Motor neuron (in vitro differentiated cells): ENCODE measurements at regions of chr19 and their contacts with region 1.

Region 1: DNA sequence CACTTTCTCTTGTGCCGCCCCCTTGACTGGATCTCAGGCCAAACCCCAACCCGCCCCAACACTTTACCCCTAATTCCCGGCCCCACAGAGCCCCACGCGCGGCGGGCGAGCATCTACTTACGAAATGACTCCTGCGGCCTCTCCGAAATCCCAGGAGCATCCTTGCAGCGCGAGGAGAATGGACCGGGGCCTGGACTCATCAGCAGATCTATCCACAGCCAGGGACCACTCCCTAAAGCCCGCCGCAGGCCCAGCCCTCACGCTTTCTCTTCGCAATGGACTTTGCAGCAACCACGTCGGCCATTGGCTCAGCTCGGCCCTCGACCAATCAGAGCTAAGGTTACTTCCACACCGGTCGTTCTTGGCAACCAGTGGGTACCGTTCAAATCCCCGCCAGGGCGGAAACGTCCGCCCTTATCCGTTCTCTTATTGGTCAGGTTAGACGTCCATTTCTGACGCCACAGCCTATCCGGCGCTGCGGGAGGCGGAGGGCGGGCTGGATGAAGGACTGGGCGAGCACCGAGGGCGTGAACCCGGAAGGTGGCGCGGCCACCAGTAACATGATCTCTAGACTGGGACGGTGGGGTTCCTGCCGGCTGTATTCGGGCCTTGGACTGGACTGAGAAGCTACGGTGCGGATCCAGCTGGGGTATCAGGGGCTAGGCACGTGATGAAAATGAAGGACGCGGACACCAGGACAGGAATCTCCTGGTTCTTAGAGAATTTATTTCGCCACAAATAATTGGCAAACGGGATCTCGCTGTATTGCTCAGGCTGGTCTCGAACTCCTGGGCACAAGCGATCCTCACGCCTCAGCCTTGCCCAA is at the starts of genes CEP89 and FAAP24:
- ATAC-seq: peak; percentile 93 to 99 (median 98)
- H3K4me3 ChIP-seq: peak within 1 kb of the TSS; percentile 56 to 85 (median 73)
- H3K27ac ChIP-seq: peak within 1 kb of the TSS; percentile 25 to 43
- H3K4me1 ChIP-seq: peaks cover 8 to 10% of the 10 kb centered on the region in 2 donors
- total RNA-seq, gene CEP89: 7.2 to 29.6 (median 18.2) TPM
- total RNA-seq, gene FAAP24: 1.0 to 4.5 (median 2.1) TPM

Region 2: GRCh38 chr19:33071887-33072286 is 100.0 kb after region 1 on chr19:
- in situ Hi-C with region 1: loop called in 2 of 9 experiments (anchors 10 to 25 kb)
- ATAC-seq: no peak
- H3K4me3 ChIP-seq: no peak overlapping the region
- H3K27ac ChIP-seq: no peak overlapping the region
- H3K4me1 ChIP-seq: no peaks in the 10 kb centered on the region

Region 3: DNA sequence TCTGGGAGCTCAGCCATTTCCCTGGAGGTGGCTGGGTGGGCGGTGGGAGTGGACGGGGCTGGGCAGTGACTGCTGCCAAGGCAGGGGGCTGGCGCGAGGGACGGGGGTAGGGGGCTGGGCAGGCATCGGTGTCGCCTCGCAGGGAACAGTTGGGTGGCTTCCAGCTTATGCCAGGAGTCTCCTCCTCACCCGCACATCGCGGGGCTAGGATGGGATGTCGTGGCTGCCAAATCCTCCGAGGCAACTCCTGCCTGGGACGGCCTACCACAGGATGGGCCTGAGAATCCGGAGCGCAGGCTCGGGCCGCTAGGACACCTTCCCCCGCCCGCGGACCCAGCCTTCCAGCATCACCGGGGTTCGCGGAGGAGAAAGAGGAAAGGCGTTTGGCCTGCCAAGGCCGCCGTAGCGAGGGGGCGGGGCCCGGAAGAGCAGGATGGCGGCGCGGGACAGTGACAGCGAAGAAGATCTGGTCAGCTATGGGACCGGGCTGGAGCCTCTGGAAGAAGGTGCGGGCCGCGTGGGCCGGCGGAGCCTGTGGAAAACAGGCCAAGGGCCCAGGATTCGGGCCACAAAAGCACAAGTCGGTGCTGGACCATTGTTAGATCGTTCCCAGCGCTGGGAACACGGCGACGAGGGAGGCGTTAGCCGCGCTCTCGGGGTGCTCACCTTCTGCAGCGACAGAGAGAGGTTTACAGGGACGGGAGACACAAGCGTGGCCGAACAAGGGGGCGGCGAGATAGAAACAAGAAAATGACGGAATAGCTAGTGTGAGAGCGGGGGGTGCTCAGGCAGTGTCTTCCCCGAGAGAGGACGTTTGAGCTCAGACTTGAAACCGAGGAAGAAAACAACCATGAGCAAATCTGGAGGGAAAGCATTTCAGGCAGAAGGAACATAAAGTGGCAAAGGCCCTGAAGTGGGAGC is 109.1 kb after region 1 on chr19 and contains the start of gene GPATCH1:
- in situ Hi-C with region 1: loop called in 2 of 9 experiments (anchors 10 to 25 kb)
- ATAC-seq: peak; percentile 66 to 94 (median 91)
- H3K4me3 ChIP-seq: peak within 1 kb of the TSS; percentile 73 to 95 (median 78)
- H3K27ac ChIP-seq: peak within 1 kb of the TSS; percentile 86 to 90
- H3K4me1 ChIP-seq: peaks cover 4 to 10% of the 10 kb centered on the region in 2 donors
- total RNA-seq, gene GPATCH1: 5.9 to 11.1 (median 9.2) TPM

Region 4: DNA sequence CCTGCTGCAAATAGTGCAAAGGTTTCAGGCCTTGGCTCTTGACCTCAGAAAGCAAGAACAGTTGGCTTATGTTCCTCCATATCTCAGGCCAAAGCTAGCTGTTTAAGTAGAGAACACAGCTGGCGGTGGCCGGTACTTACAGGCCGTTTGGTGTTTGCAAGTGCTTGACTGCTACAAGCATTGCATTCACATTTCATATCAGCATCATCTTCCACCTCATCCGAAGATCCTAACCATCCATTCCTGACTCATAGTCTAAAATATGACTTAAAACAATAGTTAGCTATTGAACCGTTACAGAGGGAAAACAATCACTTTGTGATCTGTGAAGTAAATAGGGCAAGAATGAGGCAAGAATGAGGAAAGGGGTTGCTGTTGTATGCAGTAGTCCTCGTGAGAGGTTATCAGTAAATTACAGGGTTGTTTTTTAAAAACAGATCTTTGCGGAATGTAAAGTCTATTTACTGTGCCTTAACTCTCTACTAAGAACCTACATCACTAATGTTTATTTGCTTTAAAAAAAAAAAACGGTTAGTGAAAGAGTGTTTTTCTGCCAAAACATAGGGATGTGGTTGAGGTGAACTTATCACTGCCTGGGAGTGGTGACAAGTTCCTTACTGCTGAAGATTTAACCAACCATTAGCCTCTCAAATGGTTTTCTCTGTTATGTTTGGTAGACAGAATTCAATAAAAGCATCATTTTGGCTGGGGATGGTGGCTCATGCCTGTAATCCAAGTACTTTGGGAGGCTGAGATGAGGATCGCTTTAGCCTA is 138.4 kb after region 1 on chr19:
- in situ Hi-C with region 1: loop called in 1 of 9 experiments (anchors 25 kb)
- ATAC-seq: no peak
- H3K4me3 ChIP-seq: no peak overlapping the region
- H3K27ac ChIP-seq: no peak overlapping the region
- H3K4me1 ChIP-seq: no peaks in the 10 kb centered on the region